Activated CD4-positive, alpha-beta memory T cell treated with anti-CD3 and anti-CD28 coated beads, Interleukin-2, amount 10 ng/mL, durations not matched to agents 7 days and 5 days (primary cell): ENCODE measurements at regions of chr6 and their contacts with region 1.

Region 1: DNA sequence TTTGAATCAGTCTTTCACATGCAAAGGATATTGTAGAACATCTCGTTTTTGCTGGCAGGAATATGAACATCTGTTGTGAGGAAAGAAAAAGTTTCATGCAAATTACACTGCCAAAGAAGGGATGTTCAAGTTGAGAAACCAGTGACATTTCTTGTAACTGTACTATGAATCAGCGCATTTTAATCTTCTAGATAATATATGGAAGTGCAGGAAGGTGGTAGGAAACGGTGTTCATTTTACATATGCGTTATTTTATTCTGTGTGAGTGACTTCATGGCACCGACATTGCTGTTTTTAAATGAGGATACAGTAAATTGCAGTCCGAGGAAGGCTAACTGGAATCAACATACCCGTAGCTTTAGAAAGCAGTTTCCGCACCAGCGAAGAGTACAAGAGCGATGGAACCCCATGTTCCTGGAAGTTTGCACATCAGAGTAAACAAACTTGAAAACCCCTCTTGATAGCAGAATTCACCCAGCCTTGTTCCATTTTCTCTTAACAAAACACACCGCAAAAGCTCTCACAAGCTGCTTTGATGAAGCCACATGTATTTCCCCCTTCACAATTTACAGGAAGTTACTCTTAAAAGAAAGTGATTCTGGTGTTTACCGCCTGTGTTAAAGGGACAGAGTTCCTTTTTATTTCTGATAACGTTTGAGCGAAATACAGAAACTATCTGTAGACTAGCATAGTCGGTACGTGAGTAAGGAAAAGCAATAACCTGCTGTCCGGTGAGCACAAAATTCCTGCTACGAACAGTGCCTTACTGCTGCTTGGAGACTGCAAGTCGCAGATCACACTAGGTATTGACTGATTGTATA is 11.5 kb downstream of the PRDM1 start:
- DNase-seq: peak; percentile 63
- H3K4me3 Mint-ChIP-seq: peak overlapping the region; percentile 87
- H3K27ac Mint-ChIP-seq: peak overlapping the region; percentile 97
- H3K4me1 Mint-ChIP-seq: peaks cover 70% of the 10 kb centered on the region
- H3K27me3 Mint-ChIP-seq: no peaks in the 10 kb centered on the region

Region 2: DNA sequence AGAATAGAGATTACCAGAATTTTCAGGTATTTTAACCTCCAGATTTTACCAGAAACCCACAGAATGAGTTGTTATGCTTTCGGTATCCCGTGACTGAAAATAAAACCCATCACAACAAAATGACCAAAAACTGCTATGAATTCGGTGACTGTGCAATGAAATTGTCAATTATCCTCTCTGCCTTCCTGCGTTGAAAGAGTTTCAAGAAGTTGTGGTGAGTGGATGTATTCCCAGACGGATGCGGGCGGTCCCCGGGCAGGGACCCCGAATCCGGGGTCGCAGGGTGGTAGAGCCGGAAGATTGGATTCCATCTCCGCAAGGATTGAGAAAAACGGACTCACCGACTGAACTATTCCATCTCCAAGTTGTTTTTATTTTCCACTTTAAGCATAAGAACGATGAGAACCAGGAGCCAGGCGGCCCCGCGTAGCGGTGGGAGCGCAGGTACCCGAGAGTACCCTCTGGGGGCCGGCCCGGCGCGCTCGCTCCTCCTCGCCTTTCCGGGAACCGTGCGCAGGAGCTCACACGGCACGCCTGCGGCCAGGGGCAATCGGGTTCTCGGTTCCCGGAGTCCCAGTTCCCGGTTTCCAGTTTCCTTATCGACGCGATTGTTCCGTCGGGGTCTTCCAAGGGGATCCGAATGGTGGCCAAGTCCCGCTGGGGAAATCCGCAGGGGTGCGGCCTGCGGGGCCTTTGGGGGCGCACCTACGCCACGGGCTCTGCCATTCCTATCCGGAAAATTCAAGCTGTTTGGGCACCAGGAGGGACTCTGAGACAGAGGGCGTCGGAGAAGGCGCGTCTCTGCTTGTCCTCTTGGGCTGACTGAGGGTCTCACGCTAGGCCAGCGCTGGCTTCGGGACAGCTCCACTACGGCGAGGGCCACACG is 116.4 kb before region 1 on chr6:
- CTCF ChIA-PET with region 1: interaction called, 3 read pairs
- POLR2A ChIA-PET with region 1: interaction called, 38 read pairs
- DNase-seq: peak; percentile 70
- H3K4me3 Mint-ChIP-seq: peak overlapping the region; percentile 87
- H3K27ac Mint-ChIP-seq: peak overlapping the region; percentile 93
- H3K4me1 Mint-ChIP-seq: peaks cover 78% of the 10 kb centered on the region
- H3K27me3 Mint-ChIP-seq: no peaks in the 10 kb centered on the region

Region 3: DNA sequence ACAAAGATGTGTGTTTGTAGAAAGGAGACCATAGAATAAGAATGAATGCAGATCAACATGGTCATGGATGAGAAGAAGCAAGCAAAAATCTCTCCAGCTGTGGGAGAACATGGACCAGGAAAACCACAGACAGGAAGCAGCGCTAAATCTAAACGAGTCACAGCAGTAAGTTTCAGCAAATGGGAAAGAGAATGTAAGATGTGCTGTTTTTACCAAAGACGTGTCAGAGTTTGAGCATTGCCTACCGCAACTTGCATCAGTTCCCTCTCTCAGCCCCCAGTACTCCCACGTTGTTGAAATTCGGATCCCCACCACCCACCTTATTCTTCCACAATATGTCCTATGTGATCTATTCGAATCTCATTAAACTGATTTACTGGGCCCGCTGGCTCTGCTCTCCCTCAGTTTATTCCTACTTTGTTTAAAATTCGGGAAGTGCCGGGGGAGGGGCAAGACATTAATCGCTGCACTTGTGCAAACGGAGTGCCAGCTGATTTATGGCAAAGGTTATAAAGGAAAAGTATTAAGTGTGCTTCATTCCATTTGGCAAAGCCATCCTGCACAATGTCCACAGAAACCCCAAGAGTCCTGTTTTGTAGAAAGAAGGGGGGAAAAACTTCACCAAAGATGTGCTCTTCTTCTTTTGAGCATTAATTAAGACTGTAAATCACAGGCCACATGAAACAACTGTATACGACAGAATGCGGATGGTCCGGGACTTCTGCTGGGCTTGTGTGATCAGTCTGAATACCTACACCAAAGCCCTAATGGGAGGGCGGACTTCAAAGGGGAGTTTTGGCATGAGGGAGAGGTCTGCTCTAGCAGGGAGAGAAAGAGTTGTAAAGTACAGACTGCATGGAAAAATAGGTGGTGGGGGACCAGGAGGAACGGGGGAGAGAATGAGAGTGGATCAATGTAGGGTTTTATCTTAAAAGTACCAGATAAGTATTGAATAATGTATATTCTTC is 70.6 kb before region 1 on chr6:
- CTCF ChIA-PET with region 1: no interaction called
- POLR2A ChIA-PET with region 1: no interaction called
- DNase-seq: no peak
- H3K4me3 Mint-ChIP-seq: no peak overlapping the region
- H3K27ac Mint-ChIP-seq: no peak overlapping the region
- H3K4me1 Mint-ChIP-seq: peaks cover 9% of the 10 kb centered on the region
- H3K27me3 Mint-ChIP-seq: no peaks in the 10 kb centered on the region

Region 4: GRCh38 chr6:106069478-106069877 is 28.1 kb before region 1 on chr6:
- CTCF ChIA-PET with region 1: no interaction called
- POLR2A ChIA-PET with region 1: no interaction called
- DNase-seq: no peak
- H3K4me3 Mint-ChIP-seq: no peak overlapping the region
- H3K27ac Mint-ChIP-seq: no peak overlapping the region
- H3K4me1 Mint-ChIP-seq: peaks cover 6% of the 10 kb centered on the region
- H3K27me3 Mint-ChIP-seq: no peaks in the 10 kb centered on the region

Region 5: GRCh38 chr6:106114492-106115265 is 17.1 kb after region 1 on chr6:
- CTCF ChIA-PET with region 1: interaction called, 4 read pairs
- POLR2A ChIA-PET with region 1: interaction called, 241 read pairs
- DNase-seq: peak; percentile 77
- H3K4me3 Mint-ChIP-seq: peak overlapping the region; percentile 36
- H3K27ac Mint-ChIP-seq: peak overlapping the region; percentile 85
- H3K4me1 Mint-ChIP-seq: peaks cover 95% of the 10 kb centered on the region
- H3K27me3 Mint-ChIP-seq: peaks cover 5% of the 10 kb centered on the region

Region 6: DNA sequence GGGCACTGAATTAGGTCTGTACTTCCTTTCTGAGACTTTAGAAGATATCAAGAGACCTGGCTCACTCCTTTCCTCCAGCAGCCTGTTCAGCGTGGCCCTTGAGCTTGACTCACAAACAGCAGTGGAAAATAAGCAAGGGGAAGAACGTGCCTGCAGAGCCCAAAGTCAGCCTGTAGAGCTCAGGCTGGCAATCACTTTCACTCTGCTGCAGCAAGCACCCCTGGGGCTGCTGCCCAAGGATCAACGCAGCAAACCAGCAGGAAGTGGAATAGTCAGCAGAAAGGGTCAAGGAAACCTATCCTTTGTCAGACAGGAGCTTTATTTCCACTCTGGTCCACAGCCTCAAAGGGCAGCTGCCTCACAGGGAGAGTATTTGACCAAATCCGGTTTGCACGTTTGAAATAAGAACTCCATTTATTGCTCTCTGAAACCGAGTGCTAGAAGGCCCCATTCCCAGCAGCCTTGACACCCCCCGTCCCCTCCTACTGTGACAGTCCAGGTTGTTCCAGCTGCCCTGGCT is 65.9 kb after region 1 on chr6:
- CTCF ChIA-PET with region 1: interaction called, 5 read pairs
- POLR2A ChIA-PET with region 1: interaction called, 153 read pairs
- DNase-seq: peak; percentile 77
- H3K4me3 Mint-ChIP-seq: peak overlapping the region; percentile 64
- H3K27ac Mint-ChIP-seq: peak overlapping the region; percentile 97
- H3K4me1 Mint-ChIP-seq: peaks cover 83% of the 10 kb centered on the region
- H3K27me3 Mint-ChIP-seq: no peaks in the 10 kb centered on the region

Region 7: GRCh38 chr6:106223300-106223930 is 125.8 kb after region 1 on chr6:
- CTCF ChIA-PET with region 1: interaction called, 20 read pairs
- POLR2A ChIA-PET with region 1: interaction called, 31 read pairs
- DNase-seq: peak; percentile 79
- H3K4me3 Mint-ChIP-seq: no peak overlapping the region
- H3K27ac Mint-ChIP-seq: no peak overlapping the region
- H3K4me1 Mint-ChIP-seq: peaks cover 43% of the 10 kb centered on the region
- H3K27me3 Mint-ChIP-seq: no peaks in the 10 kb centered on the region